Activated naive CD4-positive, alpha-beta T cell treated with anti-CD3 and anti-CD28 coated beads, Interleukin-2, amount 10 ng/mL, durations not matched to agents 7 days and 5 days (primary cell): ENCODE measurements at regions of chr16 and their contacts with region 1.

Region 1: GRCh38 chr16:3023669-3024478 is at the starts of genes HCFC1R1 and THOC6:
- DNase-seq: peak; percentile 98
- H3K4me3 Mint-ChIP-seq: peak within 1 kb of the TSS; percentile 90
- H3K27ac Mint-ChIP-seq: peak within 1 kb of the TSS; percentile 95
- H3K4me1 Mint-ChIP-seq: peaks cover 71% of the 10 kb centered on the region
- H3K27me3 Mint-ChIP-seq: peaks cover 35% of the 10 kb centered on the region

Region 2: DNA sequence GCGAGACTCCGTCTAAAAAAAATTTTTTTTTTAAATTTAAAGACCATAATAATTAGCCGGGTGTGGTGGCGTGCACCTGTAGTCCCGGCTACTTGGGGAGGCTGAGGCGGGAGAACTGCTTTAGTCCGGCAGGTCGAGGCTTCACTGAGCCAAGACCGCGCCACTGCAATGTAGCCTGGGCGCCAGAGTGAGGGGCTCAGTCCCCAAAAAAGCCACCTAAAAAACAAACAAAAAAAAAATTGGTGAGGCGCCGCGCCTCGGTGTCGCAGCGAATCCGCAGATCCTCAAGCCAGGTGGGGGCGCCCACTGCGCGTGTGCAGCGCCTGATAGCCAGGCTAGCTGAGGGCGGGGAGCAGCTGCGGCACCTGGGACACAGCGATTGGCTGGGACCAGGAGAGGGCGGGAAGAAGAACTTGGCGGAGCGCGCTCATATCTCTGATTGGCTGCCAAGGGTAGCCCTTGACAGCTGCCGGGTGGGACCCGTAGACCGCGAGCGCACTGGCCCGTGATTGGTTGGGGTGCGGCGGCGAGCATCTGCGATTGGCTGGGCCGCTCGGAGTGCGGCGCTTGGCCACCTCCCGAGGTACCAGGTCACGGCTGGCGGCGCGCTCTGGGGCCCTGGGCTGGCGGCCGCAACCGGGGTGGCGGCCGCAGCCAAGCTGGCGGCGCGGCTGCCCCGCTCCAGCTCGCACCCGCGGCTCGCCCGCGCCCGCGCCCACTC is 20.1 kb before region 1 on chr16:
- CTCF ChIA-PET with region 1: interaction called, 300 read pairs
- DNase-seq: peak; percentile 99
- H3K4me3 Mint-ChIP-seq: peak overlapping the region; percentile 73
- H3K27ac Mint-ChIP-seq: peak overlapping the region; percentile 72
- H3K4me1 Mint-ChIP-seq: peaks cover 35% of the 10 kb centered on the region
- H3K27me3 Mint-ChIP-seq: peaks cover 71% of the 10 kb centered on the region

Region 3: GRCh38 chr16:3045357-3045728 is 21.5 kb after region 1 on chr16:
- CTCF ChIA-PET with region 1: interaction called, 80 read pairs
- DNase-seq: peak; percentile 72
- H3K4me3 Mint-ChIP-seq: peak overlapping the region; percentile 83
- H3K27ac Mint-ChIP-seq: peak overlapping the region; percentile 82
- H3K4me1 Mint-ChIP-seq: peaks cover 51% of the 10 kb centered on the region
- H3K27me3 Mint-ChIP-seq: peaks cover 85% of the 10 kb centered on the region

Region 4: GRCh38 chr16:3051494-3051893 is 27.6 kb after region 1 on chr16:
- CTCF ChIA-PET with region 1: interaction called, 71 read pairs
- DNase-seq: no peak
- H3K4me3 Mint-ChIP-seq: no peak overlapping the region
- H3K27ac Mint-ChIP-seq: peak overlapping the region; percentile 68
- H3K4me1 Mint-ChIP-seq: peaks cover 89% of the 10 kb centered on the region
- H3K27me3 Mint-ChIP-seq: peaks cover 24% of the 10 kb centered on the region